ENCODE measurements at regions of chr22 and their contacts with region 1.

Region 1: DNA sequence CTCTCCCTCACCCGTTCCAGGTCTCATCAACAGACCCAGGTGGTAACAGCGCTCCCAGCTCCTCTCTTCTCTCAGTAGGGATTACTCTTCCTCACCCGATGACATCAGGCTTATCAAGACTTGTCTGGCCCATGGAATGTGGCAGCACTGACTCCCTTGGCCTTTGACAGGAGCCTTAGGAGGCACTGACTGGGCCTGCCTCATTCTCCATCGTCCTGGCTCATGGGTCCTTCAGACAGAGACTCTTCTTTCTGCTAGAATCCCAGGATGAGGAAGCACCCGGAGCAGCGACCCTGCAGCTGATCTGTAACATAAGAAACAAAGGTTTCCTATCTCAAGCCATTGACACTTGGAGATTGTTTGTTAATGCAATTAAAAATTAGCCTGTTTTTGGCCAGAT is 1063.6 kb downstream of the TBC1D22A start:
- DNase-seq: no peak
- H3K4me3 ChIP-seq: no peak overlapping the region
- H3K4me3 Mint-ChIP-seq: no peak overlapping the region
- H3K27ac Mint-ChIP-seq: no peak overlapping the region
- H3K4me1 ChIP-seq: no peaks in the 10 kb centered on the region
- H3K4me1 Mint-ChIP-seq: no peaks in the 10 kb centered on the region
- H3K27me3 ChIP-seq: no peaks in the 10 kb centered on the region
- H3K27me3 Mint-ChIP-seq: no peaks in the 10 kb centered on the region
- CTCF ChIP-seq: no peak

Region 2: GRCh38 chr22:47221840-47222615 is 604.0 kb before region 1 on chr22:
- CTCF ChIA-PET with region 1: no interaction called
- POLR2A ChIA-PET with region 1: no interaction called
- intact Hi-C with region 1: loop called (anchors 5 kb)
- DNase-seq: no peak
- H3K4me3 ChIP-seq: no peak overlapping the region
- H3K4me3 Mint-ChIP-seq: no peak overlapping the region
- H3K27ac Mint-ChIP-seq: no peak overlapping the region
- H3K4me1 ChIP-seq: no peaks in the 10 kb centered on the region
- H3K4me1 Mint-ChIP-seq: no peaks in the 10 kb centered on the region
- H3K27me3 ChIP-seq: no peaks in the 10 kb centered on the region
- H3K27me3 Mint-ChIP-seq: peaks cover 24% of the 10 kb centered on the region
- CTCF ChIP-seq: no peak

Region 3: GRCh38 chr22:48015701-48016100 is 189.7 kb after region 1 on chr22:
- CTCF ChIA-PET with region 1: no interaction called
- POLR2A ChIA-PET with region 1: no interaction called
- intact Hi-C with region 1: no loop called
- DNase-seq: no peak
- H3K4me3 ChIP-seq: no peak overlapping the region
- H3K4me3 Mint-ChIP-seq: no peak overlapping the region
- H3K27ac Mint-ChIP-seq: no peak overlapping the region
- H3K4me1 ChIP-seq: no peaks in the 10 kb centered on the region
- H3K4me1 Mint-ChIP-seq: no peaks in the 10 kb centered on the region
- H3K27me3 ChIP-seq: no peaks in the 10 kb centered on the region
- H3K27me3 Mint-ChIP-seq: no peaks in the 10 kb centered on the region
- CTCF ChIP-seq: no peak